Heart right ventricle (tissue), 16 donors: ENCODE measurements at regions of chr5 and their contacts with region 1.

Region 1: GRCh38 chr5:143456952-143457547 is 53.6 kb upstream of the NR3C1 start:
- DNase-seq: no peak
- ATAC-seq: peak in 3 of 8 donors; percentile 44 to 79 (median 44)
- H3K4me3 ChIP-seq: no peak overlapping the region
- H3K27ac ChIP-seq: no peak overlapping the region
- H3K4me1 ChIP-seq: peaks cover 0 to 10% (median 0%) of the 10 kb centered on the region in 9 donors
- H3K27me3 ChIP-seq: no peaks in the 10 kb centered on the region
- CTCF ChIP-seq: no peak

Region 2: DNA sequence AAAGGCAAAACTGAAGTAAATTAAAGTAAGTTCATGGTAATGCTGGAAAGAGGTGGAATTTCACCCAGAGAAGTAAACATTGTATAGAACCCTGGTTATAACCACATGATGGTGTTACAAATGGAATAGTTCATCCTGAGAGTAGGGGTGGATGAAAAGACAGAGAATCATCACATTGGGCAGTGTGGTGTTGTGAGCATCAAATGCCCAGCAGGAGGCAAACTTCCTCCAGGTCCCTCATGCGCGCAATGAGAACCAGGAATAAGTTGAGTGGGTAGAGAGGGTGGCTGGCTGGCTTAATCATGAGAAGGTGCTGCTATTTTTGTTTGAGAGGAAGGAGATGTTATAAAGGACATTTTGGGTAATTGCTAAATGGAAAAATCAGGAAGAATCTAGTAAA is 191.6 kb after region 1 on chr5:
- intact Hi-C with region 1: loop called in 1 of 10 experiments (anchors 10 kb)
- DNase-seq: no peak
- ATAC-seq: no peak
- H3K4me3 ChIP-seq: no peak overlapping the region
- H3K27ac ChIP-seq: no peak overlapping the region
- H3K4me1 ChIP-seq: peaks cover 0 to 18% (median 8%) of the 10 kb centered on the region in 9 donors
- H3K27me3 ChIP-seq: no peaks in the 10 kb centered on the region
- CTCF ChIP-seq: peak in 5 of 9 donors; percentile 12 to 30 (median 18)